Esophagus muscularis mucosa (tissue), 4 donors: ENCODE measurements at regions of chr13 and their contacts with region 1.

Region 1: DNA sequence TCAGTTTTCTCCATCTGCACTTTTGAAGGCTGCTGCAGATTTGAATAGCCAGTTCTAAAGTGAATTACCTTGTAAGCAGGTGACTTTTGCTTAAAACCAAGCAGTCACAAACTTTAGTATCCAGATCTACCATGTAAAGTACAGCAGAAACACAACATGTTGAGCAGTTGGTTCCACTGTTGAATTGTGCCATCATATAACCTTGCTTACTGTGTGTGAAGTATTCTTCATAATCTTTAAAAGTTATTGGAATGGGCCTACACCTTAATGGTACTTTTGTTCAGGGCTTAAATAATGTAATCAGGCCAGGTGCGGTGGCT is 23.2 kb upstream of the MTUS2 start:
- DNase-seq: no peak
- H3K4me3 ChIP-seq: no peak overlapping the region
- H3K27ac ChIP-seq: no peak overlapping the region
- H3K4me1 ChIP-seq: peaks cover 0 to 7% (median 5%) of the 10 kb centered on the region in 4 donors
- H3K27me3 ChIP-seq: peaks cover 0 to 31% (median 0%) of the 10 kb centered on the region in 4 donors
- CTCF ChIP-seq: no peak
- EP300 ChIP-seq: no peak
- POLR2A ChIP-seq: no peak

Region 2: GRCh38 chr13:28329395-28330158 is 467.3 kb before region 1 on chr13:
- intact Hi-C with region 1: loop called (anchors 5 kb)
- DNase-seq: no peak
- H3K4me3 ChIP-seq: no peak overlapping the region
- H3K27ac ChIP-seq: no peak overlapping the region
- H3K4me1 ChIP-seq: peaks cover 0 to 19% (median 6%) of the 10 kb centered on the region in 4 donors
- H3K27me3 ChIP-seq: no peaks in the 10 kb centered on the region
- CTCF ChIP-seq: no peak
- EP300 ChIP-seq: no peak
- POLR2A ChIP-seq: no peak

Region 3: DNA sequence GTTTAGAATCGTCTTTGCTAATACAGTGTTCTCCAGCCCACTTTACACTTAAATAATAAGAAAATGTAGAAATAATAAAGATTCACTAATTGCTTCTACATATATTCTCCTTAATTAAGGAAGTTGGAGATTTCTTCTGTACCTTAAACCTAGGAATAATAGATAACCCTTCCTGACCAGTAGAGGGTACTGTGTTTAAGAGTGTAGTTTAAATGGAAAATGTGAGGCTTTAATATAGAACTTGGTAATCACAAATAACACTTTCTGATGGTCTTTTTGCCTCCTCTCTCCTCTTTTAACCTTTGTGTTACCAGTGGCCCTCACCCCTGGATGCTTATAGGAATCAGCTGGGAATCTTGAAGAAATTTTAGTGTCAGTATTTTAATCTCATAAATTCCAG is 117.3 kb before region 1 on chr13:
- intact Hi-C with region 1: loop called (anchors 5 kb)
- DNase-seq: no peak
- H3K4me3 ChIP-seq: no peak overlapping the region
- H3K27ac ChIP-seq: no peak overlapping the region
- H3K4me1 ChIP-seq: no peaks in the 10 kb centered on the region
- H3K27me3 ChIP-seq: no peaks in the 10 kb centered on the region
- CTCF ChIP-seq: peak in 1 of 3 experiments; percentile 38
- EP300 ChIP-seq: no peak
- POLR2A ChIP-seq: no peak

Region 4: GRCh38 chr13:28942906-28943305 is 146.0 kb after region 1 on chr13:
- intact Hi-C with region 1: no loop called
- DNase-seq: no peak
- H3K4me3 ChIP-seq: no peak overlapping the region
- H3K27ac ChIP-seq: peak overlapping the region in 2 of 4 donors; percentile 24 to 49
- H3K4me1 ChIP-seq: peaks cover 0 to 14% (median 6%) of the 10 kb centered on the region in 4 donors
- H3K27me3 ChIP-seq: no peaks in the 10 kb centered on the region
- CTCF ChIP-seq: no peak
- EP300 ChIP-seq: no peak
- POLR2A ChIP-seq: no peak

Region 5: DNA sequence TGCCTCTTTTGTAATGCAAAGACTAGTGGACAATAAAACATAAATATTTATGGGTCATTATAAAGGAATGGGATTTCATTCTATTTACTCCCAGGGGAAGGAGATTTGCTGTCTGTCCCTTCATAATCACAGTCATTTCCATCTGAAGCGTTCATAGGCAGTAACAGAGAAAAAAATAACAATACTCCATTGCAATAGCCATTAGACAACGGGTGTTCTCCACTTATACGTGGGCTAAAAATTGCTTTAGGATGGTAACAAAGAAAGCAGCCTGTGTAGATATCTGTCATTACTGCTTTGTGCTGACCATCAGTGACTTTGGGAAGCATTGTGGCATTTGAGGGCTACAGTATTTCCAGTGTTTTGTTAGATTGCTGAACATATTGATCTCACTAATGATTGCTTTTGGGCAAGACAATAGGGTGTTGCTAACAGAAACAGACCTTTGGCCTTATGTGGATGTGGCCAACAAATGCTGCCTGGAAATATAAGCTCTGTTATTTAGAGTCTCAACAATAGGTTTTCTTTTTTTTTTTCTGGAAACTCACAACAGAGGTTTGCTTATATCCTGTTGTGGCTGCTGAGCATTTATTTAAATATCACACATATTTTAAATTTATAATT is 378.5 kb after region 1 on chr13:
- intact Hi-C with region 1: no loop called
- DNase-seq: no peak
- H3K4me3 ChIP-seq: no peak overlapping the region
- H3K27ac ChIP-seq: no peak overlapping the region
- H3K4me1 ChIP-seq: peaks cover 0 to 3% (median 0%) of the 10 kb centered on the region in 4 donors
- H3K27me3 ChIP-seq: no peaks in the 10 kb centered on the region
- CTCF ChIP-seq: no peak
- EP300 ChIP-seq: no peak
- POLR2A ChIP-seq: no peak